Activated CD8-positive, alpha-beta T cell treated with anti-CD3 and anti-CD28 coated beads for 36 hours (primary cell): ENCODE measurements at regions of chr10 and their contacts with region 1.

Region 1: GRCh38 chr10:102352066-102352715 is 43.3 kb upstream of the NFKB2 start:
- DNase-seq: peak; percentile 79
- ATAC-seq: peak; percentile 86
- H3K4me3 Mint-ChIP-seq: no peak overlapping the region
- H3K27ac Mint-ChIP-seq: no peak overlapping the region
- H3K4me1 Mint-ChIP-seq: peaks cover 6% of the 10 kb centered on the region
- H3K27me3 Mint-ChIP-seq: no peaks in the 10 kb centered on the region
- CTCF ChIP-seq: peak; percentile 98

Region 2: DNA sequence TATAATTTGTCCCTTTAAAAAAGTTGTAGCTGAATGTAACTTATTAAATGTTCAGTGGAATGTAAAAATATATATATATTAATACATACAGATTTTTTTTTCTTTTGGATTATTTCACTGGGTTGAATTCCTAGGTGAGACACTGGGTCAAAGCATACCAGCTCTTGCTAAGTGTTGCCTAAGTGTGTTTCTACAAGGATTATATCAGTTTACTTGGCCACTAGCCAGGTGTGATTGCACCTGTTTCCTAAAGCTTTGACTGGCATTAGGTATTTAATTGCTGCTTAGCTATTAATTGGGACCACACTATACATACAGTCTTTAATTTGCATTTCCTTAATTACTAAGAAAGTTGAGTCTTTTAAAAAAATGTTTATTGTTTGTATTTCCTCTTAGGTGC is 131.6 kb before region 1 on chr10:
- CTCF ChIA-PET with region 1: interaction called, 886 read pairs
- POLR2A ChIA-PET with region 1: no interaction called
- intact Hi-C with region 1: no loop called
- DNase-seq: no peak
- ATAC-seq: no peak
- H3K4me3 Mint-ChIP-seq: no peak overlapping the region
- H3K27ac Mint-ChIP-seq: no peak overlapping the region
- H3K4me1 Mint-ChIP-seq: peaks cover under 1% of the 10 kb centered on the region
- H3K27me3 Mint-ChIP-seq: peaks cover 3% of the 10 kb centered on the region
- CTCF ChIP-seq: no peak

Region 3: GRCh38 chr10:102245101-102245931 is 106.9 kb before region 1 on chr10 and contains the start of gene GBF1:
- CTCF ChIA-PET with region 1: interaction called, 886 read pairs
- POLR2A ChIA-PET with region 1: interaction called, 4 read pairs
- intact Hi-C with region 1: no loop called
- DNase-seq: peak; percentile 95
- ATAC-seq: peak; percentile 91
- H3K4me3 Mint-ChIP-seq: peak within 1 kb of the TSS; percentile 98
- H3K27ac Mint-ChIP-seq: peak within 1 kb of the TSS; percentile 94
- H3K4me1 Mint-ChIP-seq: peaks cover 46% of the 10 kb centered on the region
- H3K27me3 Mint-ChIP-seq: peaks cover 23% of the 10 kb centered on the region
- CTCF ChIP-seq: no peak
- total RNA-seq, gene GBF1: 25.4 to 28.2 TPM

Region 4: GRCh38 chr10:102274062-102274461 is 78.1 kb before region 1 on chr10:
- CTCF ChIA-PET with region 1: interaction called, 13 read pairs
- POLR2A ChIA-PET with region 1: interaction called, 4 read pairs
- intact Hi-C with region 1: no loop called
- DNase-seq: no peak
- ATAC-seq: no peak
- H3K4me3 Mint-ChIP-seq: no peak overlapping the region
- H3K27ac Mint-ChIP-seq: no peak overlapping the region
- H3K4me1 Mint-ChIP-seq: peaks cover 25% of the 10 kb centered on the region
- H3K27me3 Mint-ChIP-seq: no peaks in the 10 kb centered on the region
- CTCF ChIP-seq: no peak

Region 5: DNA sequence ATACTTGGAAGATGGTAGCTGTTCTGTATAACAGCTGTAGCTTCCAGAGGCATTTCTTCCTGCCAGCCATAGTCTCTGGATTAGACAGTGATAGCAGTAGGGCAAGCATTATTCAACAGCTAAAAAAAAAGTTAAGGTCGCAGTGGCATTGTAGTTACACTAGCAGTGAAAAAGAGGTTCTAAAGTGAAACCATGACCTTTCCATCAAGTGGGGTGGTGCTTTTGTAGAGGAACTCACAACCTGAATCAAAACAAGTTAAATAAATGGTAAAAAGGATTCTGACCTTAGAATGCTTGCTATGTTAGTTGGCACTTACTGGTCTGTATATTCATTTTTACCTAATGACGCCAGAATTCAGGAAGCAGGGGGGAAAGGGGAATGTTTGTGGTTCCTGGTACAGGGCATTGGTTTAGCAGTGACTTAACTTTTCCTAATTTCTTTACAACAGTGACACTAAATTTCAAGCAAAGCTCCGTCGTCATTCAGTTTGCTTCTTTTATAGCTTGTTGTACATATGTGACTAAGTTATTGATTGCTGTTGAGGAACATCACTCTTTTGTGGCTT is 51.8 kb before region 1 on chr10:
- CTCF ChIA-PET with region 1: interaction called, 11 read pairs
- POLR2A ChIA-PET with region 1: no interaction called
- intact Hi-C with region 1: no loop called
- DNase-seq: no peak
- ATAC-seq: peak; percentile 69
- H3K4me3 Mint-ChIP-seq: no peak overlapping the region
- H3K27ac Mint-ChIP-seq: peak overlapping the region; percentile 83
- H3K4me1 Mint-ChIP-seq: peaks cover 26% of the 10 kb centered on the region
- H3K27me3 Mint-ChIP-seq: no peaks in the 10 kb centered on the region
- CTCF ChIP-seq: no peak

Region 6: GRCh38 chr10:102375250-102375649 is 23.1 kb after region 1 on chr10:
- CTCF ChIA-PET with region 1: interaction called, 73 read pairs
- POLR2A ChIA-PET with region 1: no interaction called
- intact Hi-C with region 1: no loop called
- DNase-seq: no peak
- ATAC-seq: no peak
- H3K4me3 Mint-ChIP-seq: no peak overlapping the region
- H3K27ac Mint-ChIP-seq: no peak overlapping the region
- H3K4me1 Mint-ChIP-seq: no peaks in the 10 kb centered on the region
- H3K27me3 Mint-ChIP-seq: no peaks in the 10 kb centered on the region
- CTCF ChIP-seq: no peak

Region 7: GRCh38 chr10:102583435-102584417 is 231.5 kb after region 1 on chr10:
- CTCF ChIA-PET with region 1: interaction called, 19 read pairs
- POLR2A ChIA-PET with region 1: no interaction called
- intact Hi-C with region 1: no loop called
- DNase-seq: peak; percentile 92
- ATAC-seq: peak; percentile 99
- H3K4me3 Mint-ChIP-seq: no peak overlapping the region
- H3K27ac Mint-ChIP-seq: no peak overlapping the region
- H3K4me1 Mint-ChIP-seq: peaks cover 4% of the 10 kb centered on the region
- H3K27me3 Mint-ChIP-seq: no peaks in the 10 kb centered on the region
- CTCF ChIP-seq: peak; percentile 91